Activated CD4-positive, alpha-beta memory T cell treated with anti-CD3 and anti-CD28 coated beads, Interleukin-2, amount 10 ng/mL, durations not matched to agents 7 days and 5 days (primary cell): ENCODE measurements at regions of chr15 and their contacts with region 1.

Region 1: GRCh38 chr15:63288778-63289378 is 11.5 kb downstream of the APH1B start:
- DNase-seq: no peak
- H3K4me3 Mint-ChIP-seq: no peak overlapping the region
- H3K27ac Mint-ChIP-seq: no peak overlapping the region
- H3K4me1 Mint-ChIP-seq: peaks cover 5% of the 10 kb centered on the region
- H3K27me3 Mint-ChIP-seq: no peaks in the 10 kb centered on the region

Region 2: GRCh38 chr15:63402498-63403253 is 113.8 kb after region 1 on chr15:
- CTCF ChIA-PET with region 1: interaction called, 31 read pairs
- POLR2A ChIA-PET with region 1: no interaction called
- DNase-seq: no peak
- H3K4me3 Mint-ChIP-seq: no peak overlapping the region
- H3K27ac Mint-ChIP-seq: no peak overlapping the region
- H3K4me1 Mint-ChIP-seq: peaks cover 17% of the 10 kb centered on the region
- H3K27me3 Mint-ChIP-seq: peaks cover 2% of the 10 kb centered on the region

Region 3: GRCh38 chr15:63514531-63514943 is 225.7 kb after region 1 on chr15:
- CTCF ChIA-PET with region 1: no interaction called
- POLR2A ChIA-PET with region 1: no interaction called
- DNase-seq: no peak
- H3K4me3 Mint-ChIP-seq: no peak overlapping the region
- H3K27ac Mint-ChIP-seq: no peak overlapping the region
- H3K4me1 Mint-ChIP-seq: peaks cover 66% of the 10 kb centered on the region
- H3K27me3 Mint-ChIP-seq: no peaks in the 10 kb centered on the region